Gastrocnemius medialis (tissue), 4 donors: ENCODE measurements at regions of chr2 and their contacts with region 1.

Region 1: DNA sequence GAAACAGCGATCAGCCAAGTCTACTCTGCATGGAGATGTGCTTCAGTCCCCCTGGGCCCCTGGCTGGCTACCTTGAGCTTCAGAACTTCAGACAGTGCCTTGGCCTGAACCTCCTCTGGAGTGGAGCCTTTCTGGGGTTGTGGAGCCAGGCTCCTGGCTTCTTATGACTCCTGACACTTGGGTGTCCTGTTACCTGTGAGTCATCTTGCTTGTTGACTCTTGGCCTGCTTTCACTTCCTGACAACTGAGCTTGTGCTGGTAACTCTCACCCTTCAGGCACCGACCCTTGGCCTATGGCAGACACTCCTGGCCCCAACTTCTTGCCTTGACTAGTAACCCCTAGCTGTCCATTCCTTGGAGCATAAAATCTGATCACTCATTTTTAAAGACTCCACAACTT is 46.5 kb upstream of the VIT start:
- DNase-seq: peak; percentile 82 to 92
- ATAC-seq: peak; percentile 96 to 97
- H3K4me3 ChIP-seq: no peak overlapping the region
- H3K27ac ChIP-seq: peak overlapping the region; percentile 77 to 83 (median 78)
- H3K4me1 ChIP-seq: peaks cover 29 to 31% of the 10 kb centered on the region in 2 donors
- H3K27me3 ChIP-seq: no peaks in the 10 kb centered on the region
- CTCF ChIP-seq: no peak
- POLR2A ChIP-seq: peak in 1 of 2 donors; percentile 41

Region 2: DNA sequence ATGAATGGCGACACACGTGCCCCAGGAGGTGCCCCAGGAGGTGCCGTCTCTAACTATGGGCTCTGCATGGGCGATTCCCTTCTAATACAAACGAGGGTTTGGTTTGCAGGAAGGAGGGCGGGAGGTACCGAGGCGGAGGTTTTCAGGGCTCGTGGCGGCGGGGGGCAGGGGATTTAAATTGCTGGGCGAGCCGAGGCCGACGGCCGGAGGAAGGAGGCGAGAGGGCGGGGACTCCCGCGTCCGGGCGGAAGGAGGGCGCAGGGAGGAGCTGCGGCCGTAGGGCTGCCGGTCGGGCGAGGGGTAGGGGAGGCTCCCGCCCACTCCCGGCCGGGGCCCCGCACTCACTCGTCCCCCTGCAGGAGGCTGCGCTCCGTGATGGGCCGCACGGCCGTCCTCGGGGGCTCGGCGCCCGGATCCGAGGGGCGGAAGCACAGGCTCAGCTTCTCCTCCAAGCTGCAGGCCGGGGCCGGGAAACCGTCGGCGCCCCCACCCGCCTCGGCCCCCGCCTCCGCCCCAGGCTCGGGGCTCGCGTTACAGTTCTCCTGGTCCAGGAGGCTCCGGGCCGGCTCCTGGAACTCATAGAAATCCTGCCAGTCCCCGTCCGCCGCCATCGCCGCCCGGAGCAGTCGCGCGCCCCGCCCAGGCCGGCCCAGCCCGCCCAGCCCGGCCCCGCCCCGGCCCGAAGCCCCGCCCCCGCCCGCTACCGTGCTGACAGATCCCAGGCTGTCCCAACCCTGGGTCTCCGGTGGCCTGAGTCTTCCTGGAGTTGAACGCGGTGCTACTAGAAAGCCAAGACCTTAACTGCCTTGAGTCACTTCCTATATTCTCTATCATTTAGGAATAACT is 52.3 kb before region 1 on chr2 and contains the start of gene FEZ2:
- in situ Hi-C with region 1: loop called in 1 of 4 experiments (anchors 10 kb)
- intact Hi-C with region 1: loop called (anchors 2 kb)
- DNase-seq: peak; percentile 64 to 82
- ATAC-seq: peak; percentile 89 to 91
- H3K4me3 ChIP-seq: peak within 1 kb of the TSS; percentile 78 to 93 (median 85)
- H3K27ac ChIP-seq: peak within 1 kb of the TSS; percentile 92 to 97 (median 94)
- H3K4me1 ChIP-seq: peaks cover 31 to 42% of the 10 kb centered on the region in 2 donors
- H3K27me3 ChIP-seq: no peaks in the 10 kb centered on the region
- CTCF ChIP-seq: no peak
- POLR2A ChIP-seq: peak in 1 of 2 donors; percentile 37
- total RNA-seq, gene FEZ2: 65.1 to 126 (median 110) TPM